ENCODE measurements at regions of chrX and their contacts with region 1.

Region 1: GRCh38 chrX:40153335-40154249 is 55.8 kb upstream of the BCOR start:
- DNase-seq: no peak
- ATAC-seq: peak; percentile 2 to 39 (median 28)
- H3K4me3 ChIP-seq: peak overlapping the region; percentile 32 to 56 (median 53)
- H3K27ac ChIP-seq: peak overlapping the region; percentile 21 to 89 (median 82)
- H3K4me1 ChIP-seq: peaks cover 6 to 66% (median 45%) of the 10 kb centered on the region in 9 donors
- H3K27me3 ChIP-seq: peaks cover 0 to 100% (median 0%) of the 10 kb centered on the region in 7 donors
- CTCF ChIP-seq: peak in 4 of 9 donors; percentile 6 to 41 (median 16)

Region 2: GRCh38 chrX:38400389-38400910 is 1753.1 kb before region 1 on chrX:
- intact Hi-C with region 1: no loop called
- DNase-seq: no peak
- ATAC-seq: no peak
- H3K4me3 ChIP-seq: no peak overlapping the region
- H3K27ac ChIP-seq: no peak overlapping the region
- H3K4me1 ChIP-seq: no peaks in the 10 kb centered on the region
- H3K27me3 ChIP-seq: peaks cover 0 to 23% (median 0%) of the 10 kb centered on the region in 7 donors
- CTCF ChIP-seq: no peak

Region 3: DNA sequence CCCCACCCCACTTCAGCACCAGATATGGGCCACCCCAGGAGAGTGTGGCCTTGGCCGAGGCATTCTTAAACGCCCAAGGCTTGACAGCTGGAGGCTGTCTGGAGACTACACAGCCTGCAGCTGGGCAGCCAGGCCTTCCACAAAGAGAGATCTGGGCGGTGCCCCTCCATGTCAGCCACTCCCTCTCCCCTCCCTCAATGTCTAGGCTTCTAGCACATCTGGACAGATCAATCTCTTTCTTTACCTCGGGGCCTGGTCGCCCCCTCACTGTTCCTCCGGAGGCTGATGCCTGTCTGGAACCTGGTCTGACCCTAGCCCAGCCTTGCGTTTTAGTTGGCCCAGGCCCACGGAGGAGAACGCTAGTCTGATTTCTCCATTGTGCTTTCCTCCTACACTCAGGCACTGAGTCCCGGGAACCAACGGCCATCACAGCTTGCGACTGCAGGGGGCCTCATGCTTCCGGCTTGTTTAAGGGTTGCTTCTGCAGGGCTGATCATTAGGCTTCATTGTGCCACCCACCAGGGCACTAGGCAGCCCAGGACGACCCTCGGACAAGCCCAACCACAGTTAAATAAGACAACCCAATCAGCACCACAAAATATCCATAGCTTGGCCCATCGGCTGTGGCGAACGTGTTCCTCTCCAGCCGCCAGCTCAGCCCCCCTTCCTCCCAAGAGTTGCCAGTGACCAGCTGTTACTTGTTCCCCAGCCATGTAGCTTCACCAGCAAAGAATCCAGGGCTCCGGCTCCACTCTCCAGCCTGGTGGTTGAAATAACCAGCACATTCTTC is 256.4 kb before region 1 on chrX:
- intact Hi-C with region 1: loop called in 1 of 10 experiments (anchors 10 kb)
- DNase-seq: peak; percentile 20 to 33
- ATAC-seq: peak; percentile 46 to 77 (median 65)
- H3K4me3 ChIP-seq: no peak overlapping the region
- H3K27ac ChIP-seq: peak overlapping the region in 8 of 10 donors; percentile 1 to 64 (median 37)
- H3K4me1 ChIP-seq: peaks cover 3 to 41% (median 17%) of the 10 kb centered on the region in 9 donors
- H3K27me3 ChIP-seq: peaks cover 0 to 33% (median 0%) of the 10 kb centered on the region in 7 donors
- CTCF ChIP-seq: peak in 4 of 9 donors; percentile 12 to 31 (median 20)

Region 4: GRCh38 chrX:40097497-40098263 is 55.9 kb before region 1 on chrX and contains the start of gene BCOR:
- intact Hi-C with region 1: loop called in 3 of 10 experiments (anchors 5 to 10 kb)
- DNase-seq: peak; percentile 72 to 80
- ATAC-seq: peak; percentile 26 to 63 (median 56)
- H3K4me3 ChIP-seq: peak within 1 kb of the TSS; percentile 70 to 88 (median 82)
- H3K27ac ChIP-seq: peak within 1 kb of the TSS; percentile 84 to 94 (median 92)
- H3K4me1 ChIP-seq: peaks cover 0 to 40% (median 17%) of the 10 kb centered on the region in 9 donors
- H3K27me3 ChIP-seq: peaks cover 0 to 99% (median 0%) of the 10 kb centered on the region in 7 donors
- CTCF ChIP-seq: peak in 1 of 9 donors; percentile 20
- total RNA-seq, gene BCOR: 12.4 to 27.2 (median 19.9) TPM

Region 5: DNA sequence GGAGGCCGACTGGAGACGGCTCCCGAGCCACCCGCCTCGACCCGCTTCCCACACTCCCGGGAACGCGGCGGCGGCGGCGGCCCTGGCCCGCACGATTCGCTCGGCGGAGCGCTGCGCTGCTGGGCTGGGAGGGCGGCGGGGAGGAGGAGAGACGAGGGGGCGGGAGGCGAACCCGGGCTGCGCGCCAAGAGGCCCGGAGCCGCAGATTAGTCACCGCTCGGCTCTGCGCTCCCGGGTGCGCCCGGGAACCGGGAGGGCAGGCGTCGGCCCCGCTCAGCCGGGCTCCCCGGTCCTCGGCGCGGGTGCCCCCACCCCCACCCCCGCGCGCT is 44.7 kb before region 1 on chrX:
- intact Hi-C with region 1: loop called (anchors 1 to 10 kb)
- DNase-seq: peak; percentile 74 to 84
- ATAC-seq: peak; percentile 60 to 82 (median 68)
- H3K4me3 ChIP-seq: peak overlapping the region; percentile 28 to 75 (median 59)
- H3K27ac ChIP-seq: peak overlapping the region; percentile 84 to 96 (median 93)
- H3K4me1 ChIP-seq: peaks cover 2 to 44% (median 34%) of the 10 kb centered on the region in 9 donors
- H3K27me3 ChIP-seq: peaks cover 0 to 73% (median 0%) of the 10 kb centered on the region in 7 donors
- CTCF ChIP-seq: no peak

Region 6: GRCh38 chrX:40175511-40176350 is 22.1 kb after region 1 on chrX:
- intact Hi-C with region 1: loop called in 1 of 10 experiments (anchors 2 kb)
- DNase-seq: peak; percentile 75 to 77
- ATAC-seq: peak; percentile 48 to 75 (median 59)
- H3K4me3 ChIP-seq: peak overlapping the region; percentile 47 to 70 (median 63)
- H3K27ac ChIP-seq: peak overlapping the region; percentile 90 to 99 (median 98)
- H3K4me1 ChIP-seq: peaks cover 0 to 60% (median 22%) of the 10 kb centered on the region in 9 donors
- H3K27me3 ChIP-seq: peaks cover 0 to 82% (median 0%) of the 10 kb centered on the region in 7 donors
- CTCF ChIP-seq: no peak

Measured in heart right ventricle (tissue), 16 donors.